ENCODE measurements at regions of chr2 and their contacts with region 1.

Region 1: GRCh38 chr2:19989681-19990415 is at the start of gene WDR35:
- DNase-seq: peak; percentile 76 to 93 (median 87)
- ATAC-seq: peak; percentile 91
- H3K4me3 ChIP-seq: peak within 1 kb of the TSS; percentile 90
- H3K4me3 Mint-ChIP-seq: peak within 1 kb of the TSS; percentile 93
- H3K27ac ChIP-seq: peak within 1 kb of the TSS; percentile 65 to 71
- H3K27ac Mint-ChIP-seq: peak within 1 kb of the TSS; percentile 82
- H3K4me1 ChIP-seq: peaks cover 14% of the 10 kb centered on the region
- H3K4me1 Mint-ChIP-seq: peaks cover 20% of the 10 kb centered on the region
- H3K27me3 ChIP-seq: peaks cover 0 to 11% of the 10 kb centered on the region in 2 experiments
- H3K27me3 Mint-ChIP-seq: peaks cover 23% of the 10 kb centered on the region
- CTCF ChIP-seq: no peak
- total RNA-seq, gene WDR35: 2.8 to 3.2 TPM

Region 2: GRCh38 chr2:20051532-20052228 is 61.8 kb after region 1 on chr2 and contains the start of gene LAPTM4A:
- CTCF ChIA-PET with region 1: no interaction called
- POLR2A ChIA-PET with region 1: interaction called, 15 read pairs
- intact Hi-C with region 1: loop called in 1 of 2 experiments (anchors 2 kb)
- DNase-seq: peak; percentile 93 to 100 (median 96)
- ATAC-seq: peak; percentile 90
- H3K4me3 ChIP-seq: peak within 1 kb of the TSS; percentile 87
- H3K4me3 Mint-ChIP-seq: no peak within 1 kb of the TSS
- H3K27ac ChIP-seq: peak within 1 kb of the TSS; percentile 94 to 99
- H3K27ac Mint-ChIP-seq: no peak within 1 kb of the TSS
- H3K4me1 ChIP-seq: peaks cover 28% of the 10 kb centered on the region
- H3K4me1 Mint-ChIP-seq: peaks cover 29% of the 10 kb centered on the region
- H3K27me3 ChIP-seq: peaks cover 6 to 9% of the 10 kb centered on the region in 2 experiments
- H3K27me3 Mint-ChIP-seq: peaks cover 25% of the 10 kb centered on the region
- CTCF ChIP-seq: no peak
- total RNA-seq, gene LAPTM4A: 59.4 to 62.0 TPM